ENCODE measurements at regions of chr5 and their contacts with region 1.

Region 1: DNA sequence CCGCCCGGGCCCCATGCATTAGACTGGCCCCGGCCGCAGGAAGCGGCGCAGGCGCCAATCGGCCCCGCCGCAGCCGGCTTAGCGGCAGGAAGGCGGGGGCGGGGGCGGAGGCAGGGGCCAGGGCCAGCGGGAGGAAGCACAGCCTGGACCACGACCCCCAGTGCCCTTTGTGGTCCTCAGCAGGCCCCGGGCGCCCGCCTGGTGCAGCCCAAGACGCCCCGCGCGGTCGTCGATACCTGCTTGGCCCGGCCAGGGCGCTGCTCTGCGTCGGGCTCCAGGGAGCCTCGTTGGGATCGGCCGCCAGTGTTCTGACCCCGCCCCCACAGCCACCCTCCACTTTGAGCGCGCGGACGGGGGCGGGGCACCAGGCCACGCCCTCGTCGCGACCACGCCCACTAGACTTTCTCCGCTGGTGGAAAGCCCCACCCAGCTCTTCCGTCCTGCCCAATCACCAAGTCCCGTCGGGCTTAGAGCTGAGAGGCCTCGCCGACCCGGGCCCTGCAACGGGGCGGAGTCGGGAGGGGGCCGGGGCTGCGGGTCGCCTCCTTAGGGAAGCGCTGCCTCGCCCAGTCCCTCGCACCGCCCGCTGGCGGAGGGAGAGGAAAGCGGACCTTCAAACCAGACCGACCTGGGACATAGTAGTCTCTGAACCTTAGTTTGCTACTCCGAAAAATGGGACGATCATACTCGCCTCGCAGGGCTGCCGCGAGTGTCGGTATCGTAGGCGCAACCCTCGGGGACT is at the start of gene PDLIM7:
- DNase-seq: peak; percentile 92
- H3K4me3 Mint-ChIP-seq: peak within 1 kb of the TSS; percentile 78
- H3K27ac Mint-ChIP-seq: peak within 1 kb of the TSS; percentile 83
- H3K4me1 Mint-ChIP-seq: peaks cover 43% of the 10 kb centered on the region
- H3K27me3 Mint-ChIP-seq: peaks cover 16% of the 10 kb centered on the region
- total RNA-seq, gene PDLIM7: 49.2 and 49.9 TPM in 2 replicates

Region 2: DNA sequence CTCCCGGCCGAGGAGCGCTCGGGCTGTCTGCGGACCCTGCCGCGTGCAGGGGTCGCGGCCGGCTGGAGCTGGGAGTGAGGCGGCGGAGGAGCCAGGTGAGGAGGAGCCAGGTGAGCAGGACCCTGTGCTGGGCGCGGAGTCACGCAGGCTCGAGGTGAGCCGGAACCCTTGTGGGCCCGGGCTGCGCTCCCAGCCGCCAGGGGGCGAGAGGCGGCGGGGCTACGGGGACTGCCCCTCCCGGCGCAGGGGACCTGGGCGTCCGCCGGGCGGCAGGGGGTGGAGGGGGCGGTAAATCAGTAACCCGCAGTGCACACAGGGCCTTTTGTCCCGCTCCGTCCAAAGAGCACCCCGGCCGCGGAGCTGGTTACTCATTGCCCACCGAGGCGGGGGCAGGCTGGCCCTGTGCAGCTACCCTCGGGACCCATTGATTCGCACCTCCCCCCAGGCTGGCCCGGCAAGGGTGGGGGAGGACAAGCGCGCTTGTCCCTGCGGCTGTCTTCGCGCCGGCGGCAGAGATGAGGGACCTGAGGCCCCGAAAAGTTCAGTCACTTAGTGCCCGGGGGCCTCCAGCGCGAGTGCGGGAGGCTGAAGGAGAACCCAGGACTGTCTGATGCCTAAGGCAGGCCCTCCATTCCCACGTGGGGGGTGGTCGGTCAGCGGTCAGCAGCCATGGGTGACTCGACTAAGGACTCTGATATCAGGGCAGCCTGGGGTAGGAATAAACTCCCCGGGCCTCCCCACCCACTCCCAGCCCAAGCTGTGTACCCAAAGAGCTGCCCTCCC is 410.3 kb before region 1 on chr5:
- intact Hi-C with region 1: loop called (anchors 2 kb)
- DNase-seq: peak; percentile 48
- H3K4me3 Mint-ChIP-seq: no peak overlapping the region
- H3K27ac Mint-ChIP-seq: no peak overlapping the region
- H3K4me1 Mint-ChIP-seq: peaks cover 7% of the 10 kb centered on the region
- H3K27me3 Mint-ChIP-seq: peaks cover 45% of the 10 kb centered on the region

Region 3: GRCh38 chr5:177209610-177210009 is 287.9 kb before region 1 on chr5:
- intact Hi-C with region 1: no loop called
- DNase-seq: no peak
- H3K4me3 Mint-ChIP-seq: no peak overlapping the region
- H3K27ac Mint-ChIP-seq: no peak overlapping the region
- H3K4me1 Mint-ChIP-seq: no peaks in the 10 kb centered on the region
- H3K27me3 Mint-ChIP-seq: no peaks in the 10 kb centered on the region

Region 4: GRCh38 chr5:177311723-177312648 is 185.5 kb before region 1 on chr5 and contains the start of gene MXD3:
- intact Hi-C with region 1: loop called (anchors 1 kb)
- DNase-seq: peak; percentile 96
- H3K4me3 Mint-ChIP-seq: peak within 1 kb of the TSS; percentile 89
- H3K27ac Mint-ChIP-seq: peak within 1 kb of the TSS; percentile 85
- H3K4me1 Mint-ChIP-seq: peaks cover 44% of the 10 kb centered on the region
- H3K27me3 Mint-ChIP-seq: no peaks in the 10 kb centered on the region
- total RNA-seq, gene MXD3: 9.6 and 11.8 TPM in 2 replicates

Region 5: DNA sequence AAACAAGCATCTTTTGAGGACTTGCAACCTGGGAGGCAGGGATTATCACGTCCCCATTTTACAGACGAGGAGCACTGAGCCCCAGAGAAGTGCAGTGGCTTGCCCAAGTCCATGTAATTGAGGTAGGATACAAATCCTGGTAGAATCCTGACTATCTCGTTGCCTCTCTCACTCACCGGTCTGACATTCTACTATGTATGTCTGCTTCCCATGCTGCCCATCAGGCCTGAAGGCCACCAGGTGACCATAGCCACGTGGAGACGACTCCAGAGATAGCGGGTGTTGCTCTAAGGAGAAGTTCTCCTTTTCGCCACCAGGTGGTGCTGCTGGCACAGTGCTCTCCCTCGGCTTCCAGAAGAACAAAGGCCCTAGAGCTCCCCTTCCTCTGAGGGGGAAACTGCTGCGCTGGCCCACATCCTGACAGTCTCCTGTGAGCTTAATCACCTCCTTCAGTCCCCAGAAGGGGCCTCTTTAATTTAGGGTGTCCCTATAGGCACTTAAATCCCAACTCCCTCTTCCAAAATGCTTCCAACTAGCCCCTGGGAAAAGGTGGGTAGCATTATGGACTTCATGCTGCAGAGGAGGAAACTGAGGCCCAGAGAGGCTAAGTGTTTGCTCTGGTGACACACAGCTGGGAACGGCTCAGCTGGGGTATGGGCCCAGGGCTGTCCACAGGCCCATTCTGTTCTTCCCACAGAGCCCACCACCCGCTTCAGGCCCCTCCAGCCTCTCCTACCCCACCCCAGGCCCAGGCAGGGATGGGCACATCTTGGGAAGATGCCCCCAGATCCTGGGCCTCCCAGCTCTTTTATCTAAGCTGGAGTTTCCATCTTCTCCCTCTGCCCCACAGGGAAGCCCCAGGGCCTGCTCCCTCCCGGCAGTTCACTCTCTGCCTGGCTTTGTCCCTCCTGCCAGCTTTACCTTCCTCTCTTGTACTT is 106.8 kb before region 1 on chr5:
- intact Hi-C with region 1: loop called (anchors 1 kb)
- DNase-seq: peak; percentile 80
- H3K4me3 Mint-ChIP-seq: peak overlapping the region; percentile 5
- H3K27ac Mint-ChIP-seq: peak overlapping the region; percentile 65
- H3K4me1 Mint-ChIP-seq: peaks cover 34% of the 10 kb centered on the region
- H3K27me3 Mint-ChIP-seq: peaks cover 3% of the 10 kb centered on the region

Region 6: GRCh38 chr5:177454397-177455035 is 42.9 kb before region 1 on chr5:
- intact Hi-C with region 1: loop called (anchors 1 kb)
- DNase-seq: peak; percentile 89
- H3K4me3 Mint-ChIP-seq: no peak overlapping the region
- H3K27ac Mint-ChIP-seq: peak overlapping the region; percentile 40
- H3K4me1 Mint-ChIP-seq: peaks cover 11% of the 10 kb centered on the region
- H3K27me3 Mint-ChIP-seq: peaks cover 18% of the 10 kb centered on the region

Region 7: DNA sequence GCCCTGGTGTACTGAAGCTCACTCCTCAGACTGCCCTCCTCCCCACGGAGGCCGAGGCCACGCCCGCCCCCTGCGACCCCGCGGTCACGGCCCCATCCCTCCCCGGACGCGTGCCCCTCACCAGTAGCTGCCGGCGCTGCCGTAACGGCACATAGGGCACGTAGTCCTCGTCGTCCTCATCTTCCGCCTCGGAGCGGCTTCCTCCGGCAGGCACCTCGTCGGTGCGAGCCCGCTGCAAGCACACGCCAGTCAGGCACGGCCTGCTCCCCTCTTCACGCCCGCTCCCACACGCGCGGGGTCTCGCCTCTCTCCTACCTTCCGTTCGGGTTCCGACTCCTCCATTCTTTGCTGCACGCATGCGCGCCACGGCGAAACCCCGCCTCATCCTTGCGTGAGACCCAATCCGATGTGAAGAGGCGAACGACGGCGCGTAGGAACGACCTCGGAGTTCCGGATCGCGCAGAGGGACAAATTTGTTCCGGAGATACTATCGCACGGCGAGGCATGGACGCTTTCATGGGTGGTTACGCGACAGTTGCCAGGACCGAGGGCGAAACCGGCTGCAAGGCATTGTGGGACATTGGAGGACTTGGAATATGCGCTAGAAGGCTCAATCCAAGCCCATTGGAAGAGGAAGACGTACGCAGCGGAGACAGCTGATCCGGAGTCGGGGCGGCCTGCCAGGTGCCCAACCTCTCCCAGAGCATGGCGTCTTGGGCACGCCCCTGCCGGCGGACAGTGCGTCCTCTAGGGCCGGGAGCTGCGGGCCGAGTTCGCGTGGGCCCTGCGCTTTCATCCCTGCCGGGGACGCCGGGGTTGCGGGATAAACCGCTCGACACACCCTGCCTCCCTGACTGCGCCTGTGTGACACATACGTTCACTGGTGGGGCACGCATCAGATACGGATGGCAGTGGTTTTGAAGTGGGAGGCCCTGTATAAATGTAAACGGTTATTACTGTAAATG is 19.4 kb after region 1 on chr5 and contains the start of gene DDX41:
- intact Hi-C with region 1: loop called (anchors 1 kb)
- DNase-seq: peak; percentile 96
- H3K4me3 Mint-ChIP-seq: peak within 1 kb of the TSS; percentile 91
- H3K27ac Mint-ChIP-seq: peak within 1 kb of the TSS; percentile 88
- H3K4me1 Mint-ChIP-seq: peaks cover 46% of the 10 kb centered on the region
- H3K27me3 Mint-ChIP-seq: no peaks in the 10 kb centered on the region
- total RNA-seq, gene DDX41: 151 and 166 TPM in 2 replicates

Measured in activated T-helper 1 cell treated with anti-CD3 and anti-CD28 coated beads, Interleukin-12 subunit alpha, Interleukin-12 subunit beta, Interleukin-2, Interleukin-4 antibody, amounts not matched to agents 30 ng/mL and 10 ng/mL and 1 ng/mL, durations not matched to agents 14 hours and 24 hours and 36 hours (primary cell).